Left ventricle myocardium superior (tissue), 1 donor: ENCODE measurements at regions of chr21 and their contacts with region 1.

Region 1: GRCh38 chr21:15592271-15592860 is 137.4 kb upstream of the USP25 start:
- DNase-seq: no peak
- ATAC-seq: no peak

Region 2: DNA sequence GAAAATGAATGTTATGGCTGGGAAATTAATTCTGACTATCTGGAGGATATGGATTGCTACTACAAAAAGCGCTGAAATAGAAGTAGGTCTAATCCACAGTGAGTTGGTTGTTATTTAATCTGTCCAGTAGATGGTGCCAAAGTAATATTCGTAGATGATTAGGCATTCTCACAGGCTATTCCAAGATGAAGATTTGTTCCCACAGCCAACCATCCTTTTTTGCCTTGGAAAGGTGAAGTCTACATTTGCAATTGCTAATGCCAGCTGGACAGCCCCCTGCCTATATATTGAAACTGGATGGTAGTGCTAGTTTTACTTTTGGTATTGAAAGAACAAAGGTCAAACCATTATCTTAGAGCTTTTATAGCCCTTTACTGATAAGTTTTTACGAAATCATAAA is 1332.6 kb before region 1 on chr21:
- intact Hi-C with region 1: loop called (anchors 5 kb)
- DNase-seq: no peak
- ATAC-seq: peak; percentile 52

Region 3: DNA sequence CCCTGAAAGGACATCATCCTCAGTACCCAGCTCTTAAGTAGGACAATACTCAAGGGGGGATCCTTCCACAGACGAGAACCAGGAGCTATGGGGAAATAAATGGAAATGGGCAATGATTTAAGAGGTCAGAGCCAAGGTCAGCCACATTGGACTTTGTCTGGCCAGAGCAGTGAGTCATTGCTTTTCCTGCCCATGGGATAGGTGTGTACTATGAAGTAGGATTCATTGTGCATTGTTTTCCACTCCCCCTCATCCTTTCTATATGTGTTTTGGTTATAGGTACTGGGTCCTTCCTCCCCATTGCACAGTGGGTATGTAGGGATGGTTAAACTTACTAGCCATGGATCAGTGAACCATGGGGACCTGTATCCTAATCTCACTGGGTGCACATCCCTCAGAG is 191.5 kb before region 1 on chr21:
- intact Hi-C with region 1: no loop called
- DNase-seq: no peak
- ATAC-seq: no peak

Region 4: DNA sequence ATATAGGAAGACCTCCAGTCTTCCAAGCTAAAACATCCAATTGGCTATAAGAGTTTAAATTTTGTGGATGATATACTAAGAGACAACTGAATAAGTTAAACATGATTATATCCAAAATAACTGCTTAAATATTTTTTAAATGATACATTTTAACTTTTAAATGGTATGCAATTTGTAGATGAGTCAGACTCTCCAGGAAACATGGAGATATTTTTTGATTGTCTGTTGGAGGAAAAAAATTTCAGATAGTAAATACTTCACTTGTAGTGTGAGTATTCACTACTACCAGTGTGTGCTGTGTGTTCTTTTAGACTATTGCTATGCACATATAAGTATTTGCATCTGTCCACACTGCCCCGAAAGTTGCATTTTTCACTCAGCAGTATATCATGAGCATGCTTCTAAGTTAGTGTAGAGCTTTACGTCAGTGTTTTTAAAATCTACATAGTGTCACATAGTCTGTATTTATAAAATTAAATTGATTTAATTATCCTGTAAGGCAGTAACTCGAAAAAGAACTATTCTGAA is 228.6 kb after region 1 on chr21:
- intact Hi-C with region 1: no loop called
- DNase-seq: no peak
- ATAC-seq: no peak